Aorta (tissue), 5 donors: ENCODE measurements at regions of chr20 and their contacts with region 1.

Region 1: GRCh38 chr20:10419550-10420133 is 14.4 kb downstream of the MKKS start:
- DNase-seq: no peak
- ATAC-seq: no peak
- H3K4me3 ChIP-seq: no peak overlapping the region
- H3K27ac ChIP-seq: no peak overlapping the region
- H3K4me1 ChIP-seq: peaks cover 0 to 3% of the 10 kb centered on the region in 2 donors
- H3K27me3 ChIP-seq: no peaks in the 10 kb centered on the region

Region 2: DNA sequence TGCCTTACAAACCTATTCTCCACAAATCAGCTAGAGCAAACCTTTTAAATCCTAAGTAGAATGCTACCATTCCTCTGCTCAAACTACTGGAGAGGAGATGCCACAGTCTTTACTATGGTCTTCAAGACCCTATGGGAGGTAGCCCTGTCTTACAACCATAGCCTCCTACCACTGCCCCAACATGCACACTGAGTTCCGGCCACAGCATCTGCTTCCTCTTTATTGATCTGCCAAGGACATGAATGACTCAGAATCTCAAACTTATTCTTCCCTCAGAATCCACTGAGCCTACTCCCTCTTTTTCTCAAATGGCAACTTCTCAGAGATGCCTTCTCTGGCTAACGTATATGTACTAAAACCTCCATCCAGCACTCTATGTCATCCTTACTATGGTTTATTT is 397.0 kb before region 1 on chr20:
- intact Hi-C with region 1: no loop called
- DNase-seq: no peak
- ATAC-seq: no peak
- H3K4me3 ChIP-seq: no peak overlapping the region
- H3K27ac ChIP-seq: no peak overlapping the region
- H3K4me1 ChIP-seq: no peaks in the 10 kb centered on the region
- H3K27me3 ChIP-seq: no peaks in the 10 kb centered on the region

Region 3: DNA sequence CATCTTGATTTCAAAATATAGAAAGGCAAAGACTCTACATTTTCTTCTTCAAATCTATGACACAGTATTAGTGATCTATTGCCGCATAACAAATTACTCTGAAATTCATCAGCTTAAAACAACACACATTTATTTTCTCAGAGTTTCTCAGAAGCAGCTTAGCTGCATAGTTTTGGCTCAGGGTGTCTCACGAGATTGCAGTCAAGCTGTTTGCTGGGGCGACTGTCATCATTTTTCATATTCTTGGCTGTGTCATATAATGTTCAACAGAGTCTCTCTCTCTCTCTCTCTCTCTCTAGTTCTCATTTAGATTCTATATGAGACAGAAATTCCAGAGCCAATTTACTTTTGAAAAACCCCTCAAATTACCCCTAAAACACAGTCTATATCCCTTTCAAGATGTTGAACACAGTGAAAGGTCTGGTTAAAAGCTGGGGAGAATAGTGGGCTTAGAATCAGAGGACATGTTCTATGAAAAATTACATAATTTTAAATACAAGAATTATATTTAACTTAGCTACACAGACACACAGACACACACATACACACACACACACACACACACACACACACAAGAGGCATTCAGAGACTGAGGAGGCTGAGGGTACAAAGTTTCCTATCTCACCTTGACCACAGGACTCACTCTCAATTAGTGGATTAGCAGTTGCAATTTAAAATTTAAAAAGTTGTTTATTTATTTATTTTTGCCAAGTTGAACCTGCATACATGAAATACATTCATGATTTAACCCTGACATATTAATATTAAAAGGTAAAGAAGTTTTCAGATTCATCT is 72.4 kb before region 1 on chr20:
- intact Hi-C with region 1: loop called in 1 of 2 experiments (anchors 2 kb)
- DNase-seq: no peak
- ATAC-seq: no peak
- H3K4me3 ChIP-seq: no peak overlapping the region
- H3K27ac ChIP-seq: no peak overlapping the region
- H3K4me1 ChIP-seq: no peaks in the 10 kb centered on the region
- H3K27me3 ChIP-seq: no peaks in the 10 kb centered on the region

Region 4: DNA sequence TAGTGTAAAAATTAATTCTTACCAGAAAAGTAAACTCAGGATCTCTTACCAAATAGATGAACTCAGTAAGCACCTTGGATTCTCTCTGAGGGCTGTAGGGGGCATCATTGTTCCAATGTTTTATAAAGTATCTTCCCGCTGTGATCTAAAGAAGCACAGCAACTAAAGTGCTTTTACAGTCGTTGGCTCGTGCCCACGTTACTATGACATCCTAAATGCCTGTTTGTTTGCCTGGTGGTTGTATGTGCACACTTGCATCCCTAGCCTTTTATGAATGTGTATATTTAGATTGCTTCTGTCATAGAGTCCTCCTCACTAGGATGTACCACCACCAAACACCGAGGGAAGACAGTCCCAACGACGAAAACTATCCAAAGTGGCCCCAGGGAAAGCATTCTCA is 50.0 kb after region 1 on chr20:
- intact Hi-C with region 1: no loop called
- DNase-seq: peak in 1 of 2 donors; percentile 69
- ATAC-seq: peak; percentile 84
- H3K4me3 ChIP-seq: no peak overlapping the region
- H3K27ac ChIP-seq: peak overlapping the region in 1 of 2 donors; percentile 13
- H3K4me1 ChIP-seq: peaks cover 5 to 8% of the 10 kb centered on the region in 2 donors
- H3K27me3 ChIP-seq: no peaks in the 10 kb centered on the region